ENCODE measurements at regions of chr9 and their contacts with region 1.

Region 1: GRCh38 chr9:74952281-74953151 is at the start of gene C9orf40:
- DNase-seq: peak; percentile 96
- H3K4me3 ChIP-seq: peak within 1 kb of the TSS; percentile 90
- H3K27ac ChIP-seq: peak within 1 kb of the TSS; percentile 93
- H3K4me1 ChIP-seq: peaks cover 32% of the 10 kb centered on the region
- CTCF ChIP-seq: peak; percentile 74
- total RNA-seq, gene C9orf40: 16.2 and 19.8 TPM in 2 replicates

Region 2: GRCh38 chr9:73470766-73471165 is 1481.8 kb before region 1 on chr9:
- CTCF ChIA-PET with region 1: no interaction called
- POLR2A ChIA-PET with region 1: interaction called, 11 read pairs
- intact Hi-C with region 1: no loop called
- DNase-seq: no peak
- H3K4me3 ChIP-seq: no peak overlapping the region
- H3K27ac ChIP-seq: no peak overlapping the region
- H3K4me1 ChIP-seq: no peaks in the 10 kb centered on the region
- CTCF ChIP-seq: no peak

Region 3: GRCh38 chr9:74773886-74774479 is 178.5 kb before region 1 on chr9:
- CTCF ChIA-PET with region 1: interaction called, 3 read pairs
- POLR2A ChIA-PET with region 1: interaction called, 3 read pairs
- intact Hi-C with region 1: loop called (anchors 5 kb)
- DNase-seq: peak; percentile 77
- H3K4me3 ChIP-seq: no peak overlapping the region
- H3K27ac ChIP-seq: no peak overlapping the region
- H3K4me1 ChIP-seq: no peaks in the 10 kb centered on the region
- CTCF ChIP-seq: peak; percentile 98

Region 4: DNA sequence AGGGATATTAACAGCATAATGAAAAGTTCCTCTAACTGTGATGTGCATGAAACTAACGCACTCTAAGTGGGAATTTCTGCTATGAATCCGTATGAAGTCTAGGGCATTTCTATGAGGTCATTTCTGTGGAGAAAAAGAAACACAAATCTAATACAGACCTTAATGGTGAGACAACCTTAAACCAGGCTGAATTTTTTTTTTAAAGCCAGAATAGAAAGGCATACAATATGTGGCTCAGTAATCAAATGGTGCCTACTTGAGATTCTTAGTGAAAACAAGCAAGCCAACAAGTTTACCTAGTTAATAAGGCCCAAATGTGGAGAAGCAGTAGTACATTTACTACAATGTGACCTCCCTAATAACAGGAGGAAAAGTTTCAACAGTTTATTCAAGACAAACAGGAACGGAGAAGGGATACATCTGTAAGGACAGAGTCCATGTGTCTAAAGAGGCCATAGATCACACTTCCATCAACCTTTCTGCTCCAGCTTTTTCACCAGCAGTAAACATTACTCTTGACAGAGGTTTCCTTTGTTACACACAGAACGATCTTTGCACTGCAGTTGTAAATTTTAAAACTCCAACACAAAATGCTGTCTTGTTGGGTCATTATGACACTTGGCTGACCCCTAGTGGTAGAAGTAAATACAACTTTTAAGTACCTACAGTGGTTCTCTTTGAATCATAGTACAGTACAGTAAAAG is 49.4 kb after region 1 on chr9:
- CTCF ChIA-PET with region 1: no interaction called
- POLR2A ChIA-PET with region 1: interaction called, 7 read pairs
- intact Hi-C with region 1: loop called (anchors 2 kb)
- DNase-seq: peak; percentile 84
- H3K4me3 ChIP-seq: no peak overlapping the region
- H3K27ac ChIP-seq: no peak overlapping the region
- H3K4me1 ChIP-seq: no peaks in the 10 kb centered on the region
- CTCF ChIP-seq: peak; percentile 90

Region 5: DNA sequence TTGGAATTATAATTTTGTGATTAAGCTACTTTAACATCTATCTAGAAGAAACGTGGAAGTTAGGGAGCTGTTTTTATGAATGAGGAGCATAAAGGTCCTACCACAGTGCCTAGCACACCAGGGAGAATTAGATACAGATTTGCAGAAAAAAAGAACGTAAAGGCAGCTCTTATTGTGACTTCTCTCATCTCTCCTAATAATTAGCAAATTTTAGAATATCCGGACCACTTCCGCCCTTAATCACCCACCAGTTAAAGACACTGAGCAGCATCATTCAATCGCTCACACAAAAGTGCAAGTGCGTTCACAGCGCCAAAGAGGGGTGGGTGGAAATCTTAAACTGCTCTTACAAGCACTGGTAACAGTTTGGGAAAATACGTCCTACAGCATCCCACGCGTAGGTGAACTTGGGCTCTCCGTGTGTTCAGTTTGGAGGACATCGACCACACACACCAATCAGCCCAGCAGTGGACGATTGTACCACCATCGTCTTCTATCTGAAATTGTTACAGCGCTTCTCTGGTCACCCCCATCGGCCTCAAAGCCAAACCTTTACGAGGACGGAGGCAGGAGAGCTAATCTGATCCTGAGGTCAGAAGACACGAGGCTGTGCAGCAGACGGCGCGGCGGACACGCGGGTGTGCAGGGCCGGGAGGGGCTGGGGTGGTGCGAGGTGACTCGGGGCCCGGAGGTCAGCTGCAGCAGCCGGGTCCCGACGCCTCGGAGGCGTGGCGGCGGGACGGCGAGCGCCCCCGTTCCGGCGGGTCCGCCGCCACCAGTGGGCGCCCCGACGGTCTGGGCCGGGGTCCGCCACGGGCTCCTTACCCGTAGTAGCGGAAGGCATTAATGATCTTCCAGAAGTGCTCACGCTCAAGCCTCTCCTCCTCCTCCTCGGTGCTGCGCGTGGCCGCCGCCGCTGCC is 74.9 kb after region 1 on chr9:
- CTCF ChIA-PET with region 1: interaction called, 14 read pairs
- POLR2A ChIA-PET with region 1: interaction called, 78 read pairs
- intact Hi-C with region 1: loop called (anchors 1 kb)
- DNase-seq: peak; percentile 72
- H3K4me3 ChIP-seq: peak overlapping the region; percentile 74
- H3K27ac ChIP-seq: peak overlapping the region; percentile 90
- H3K4me1 ChIP-seq: peaks cover 27% of the 10 kb centered on the region
- CTCF ChIP-seq: peak; percentile 54; the same call in 1 of the 2 replicates

Region 6: DNA sequence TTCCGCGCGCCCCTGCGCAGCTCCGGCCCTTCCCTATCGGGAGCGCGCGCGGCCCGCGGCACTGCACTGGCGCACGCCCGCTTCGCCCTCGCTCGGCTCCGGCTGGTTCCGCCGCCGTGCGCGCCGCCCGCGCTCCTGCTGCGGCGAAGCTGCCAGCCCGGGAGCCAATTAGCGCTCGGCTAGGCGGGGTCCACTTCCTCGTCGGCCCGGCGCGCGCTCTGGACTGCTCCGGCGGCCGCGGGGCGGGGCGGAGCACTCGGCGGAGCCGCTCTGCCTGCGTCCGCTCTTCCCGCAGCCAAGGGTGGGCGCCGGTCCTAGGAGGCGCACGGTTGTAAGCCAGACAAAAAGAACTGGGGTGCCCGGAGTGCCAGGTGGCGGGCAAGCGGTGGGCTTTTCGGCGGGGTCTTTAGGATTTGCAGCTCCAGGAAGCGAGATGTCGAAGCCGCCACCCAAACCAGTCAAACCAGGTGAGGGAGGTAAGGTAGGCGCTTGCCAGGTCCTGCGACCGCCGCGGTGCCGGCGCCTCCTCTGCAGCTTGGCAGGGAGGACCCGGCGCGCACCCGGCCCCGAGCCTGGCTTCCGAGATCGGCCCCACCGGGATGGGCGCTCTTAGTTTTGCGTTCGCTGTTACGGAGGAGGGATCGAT is 135.9 kb after region 1 on chr9 and contains the start of gene OSTF1:
- CTCF ChIA-PET with region 1: no interaction called
- POLR2A ChIA-PET with region 1: interaction called, 18 read pairs
- intact Hi-C with region 1: loop called (anchors 1 kb)
- DNase-seq: peak; percentile 97
- H3K4me3 ChIP-seq: peak within 1 kb of the TSS; percentile 93
- H3K27ac ChIP-seq: peak within 1 kb of the TSS; percentile 85
- H3K4me1 ChIP-seq: peaks cover 44% of the 10 kb centered on the region
- CTCF ChIP-seq: no peak
- total RNA-seq, gene OSTF1: 37.3 and 49.9 TPM in 2 replicates

Region 7: DNA sequence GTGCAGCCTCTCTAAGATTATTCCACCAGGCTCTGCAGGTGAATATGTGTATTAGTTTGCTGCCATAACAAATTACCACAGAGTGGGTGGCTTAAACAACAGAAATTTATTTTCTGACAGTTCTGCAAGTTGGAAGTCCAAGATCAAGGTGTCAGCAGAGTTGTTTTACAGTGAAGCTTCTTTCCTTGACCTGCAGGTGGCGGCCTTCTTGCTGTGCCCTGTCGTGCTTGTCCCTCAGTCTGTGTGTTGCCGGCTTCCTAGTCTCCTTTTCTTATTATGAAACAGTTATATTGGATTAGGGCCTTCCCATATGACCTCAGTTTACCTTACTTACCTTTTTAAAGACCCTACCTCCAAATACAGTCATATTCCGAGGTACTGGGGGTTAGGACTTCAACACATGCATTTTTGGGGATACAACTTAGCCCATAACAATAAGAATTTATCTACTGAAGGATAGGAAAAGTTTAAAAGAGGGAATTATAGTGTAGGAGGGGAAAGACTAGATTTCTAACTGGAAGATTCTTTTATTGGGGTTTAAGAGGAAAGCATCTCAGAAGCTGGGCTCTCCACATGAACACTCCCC is 233.2 kb after region 1 on chr9:
- CTCF ChIA-PET with region 1: no interaction called
- POLR2A ChIA-PET with region 1: no interaction called
- intact Hi-C with region 1: no loop called
- DNase-seq: peak; percentile 56
- H3K4me3 ChIP-seq: no peak overlapping the region
- H3K27ac ChIP-seq: no peak overlapping the region
- H3K4me1 ChIP-seq: no peaks in the 10 kb centered on the region
- CTCF ChIP-seq: peak; percentile 87

Region 8: GRCh38 chr9:76393963-76394679 is 1441.6 kb after region 1 on chr9 and contains the start of gene RFK:
- CTCF ChIA-PET with region 1: no interaction called
- POLR2A ChIA-PET with region 1: no interaction called
- intact Hi-C with region 1: loop called (anchors 10 kb)
- DNase-seq: peak; percentile 93
- H3K4me3 ChIP-seq: peak within 1 kb of the TSS; percentile 82
- H3K27ac ChIP-seq: peak within 1 kb of the TSS; percentile 77
- H3K4me1 ChIP-seq: peaks cover 24% of the 10 kb centered on the region
- CTCF ChIP-seq: peak; percentile 71
- total RNA-seq, gene RFK: 25.4 and 37.8 TPM in 2 replicates